ENCODE measurements at regions of chr10 and their contacts with region 1.

Region 1: GRCh38 chr10:110007701-110008517 is at the start of gene ADD3:
- DNase-seq: peak; percentile 91
- H3K4me3 ChIP-seq: peak within 1 kb of the TSS; percentile 71 to 99 (median 88)
- H3K27ac ChIP-seq: peak within 1 kb of the TSS; percentile 30
- H3K4me1 ChIP-seq: peaks cover 18% of the 10 kb centered on the region
- H3K27me3 ChIP-seq: peaks cover 0 to 4% of the 10 kb centered on the region in 2 experiments
- CTCF ChIP-seq: no peak
- POLR2A ChIP-seq: peak; percentile 57
- total RNA-seq, gene ADD3: 52.3 and 55.2 TPM in 2 replicates

Region 2: GRCh38 chr10:109214886-109215740 is 792.8 kb before region 1 on chr10:
- CTCF ChIA-PET with region 1: no interaction called
- POLR2A ChIA-PET with region 1: no interaction called
- dilution Hi-C with region 1: no loop called
- intact Hi-C with region 1: no loop called
- DNase-seq: no peak
- H3K4me3 ChIP-seq: no peak overlapping the region
- H3K27ac ChIP-seq: no peak overlapping the region
- H3K4me1 ChIP-seq: no peaks in the 10 kb centered on the region
- H3K27me3 ChIP-seq: no peaks in the 10 kb centered on the region
- CTCF ChIP-seq: no peak
- POLR2A ChIP-seq: no peak

Region 3: DNA sequence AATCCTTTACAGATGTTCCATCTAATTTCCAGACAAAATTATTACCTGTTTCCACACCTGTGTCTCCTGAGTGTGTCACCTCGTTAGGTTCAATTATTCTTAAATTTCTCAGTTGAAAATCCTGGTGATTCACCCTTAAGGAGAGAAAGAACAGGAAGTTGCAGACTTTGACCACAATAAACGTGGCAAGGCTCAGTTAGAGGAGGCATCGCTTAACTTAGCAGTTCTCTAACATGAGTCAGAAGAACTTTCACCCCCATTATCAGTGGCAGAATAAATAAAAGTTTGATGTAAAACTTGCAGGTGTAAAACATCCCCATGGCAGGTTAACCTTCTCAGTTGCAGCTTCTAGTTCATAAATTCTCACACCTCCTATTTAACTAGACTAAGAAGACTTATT is 92.9 kb before region 1 on chr10:
- CTCF ChIA-PET with region 1: no interaction called
- POLR2A ChIA-PET with region 1: no interaction called
- dilution Hi-C with region 1: no loop called
- intact Hi-C with region 1: loop called (anchors 2 kb)
- DNase-seq: peak; percentile 81
- H3K4me3 ChIP-seq: no peak overlapping the region
- H3K27ac ChIP-seq: peak overlapping the region; percentile 32
- H3K4me1 ChIP-seq: peaks cover 12% of the 10 kb centered on the region
- H3K27me3 ChIP-seq: no peaks in the 10 kb centered on the region
- CTCF ChIP-seq: no peak
- POLR2A ChIP-seq: no peak

Region 4: DNA sequence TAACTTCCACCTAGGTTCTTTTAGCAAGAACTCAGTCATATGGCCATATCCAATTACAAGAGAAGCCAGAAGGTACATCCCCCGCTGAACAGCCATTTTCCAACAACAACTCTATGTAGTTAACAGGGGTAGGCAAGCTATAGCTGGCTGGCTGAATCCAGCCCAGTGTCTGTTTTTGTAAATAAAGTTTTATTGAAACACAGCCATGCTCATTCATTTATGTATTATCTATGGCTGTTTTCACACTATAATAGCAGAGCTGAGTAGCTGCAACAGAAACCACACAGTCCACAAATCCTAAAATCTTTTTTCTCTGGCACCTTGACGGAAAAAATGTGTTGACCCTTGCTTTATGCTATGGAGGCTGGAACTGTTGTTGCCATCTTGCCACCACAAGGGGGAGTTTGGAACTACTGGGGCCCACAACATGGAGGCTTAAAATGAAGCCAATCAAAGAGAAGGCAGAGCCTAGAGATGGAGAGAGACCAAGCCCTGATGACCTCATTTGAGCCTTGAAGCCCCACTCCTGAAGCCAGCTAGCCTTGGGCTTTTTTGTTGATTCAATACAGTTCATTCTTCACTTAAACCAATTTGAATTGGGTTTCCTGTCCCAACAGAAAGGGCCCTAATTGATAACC is 51.3 kb before region 1 on chr10:
- CTCF ChIA-PET with region 1: interaction called, 3 read pairs
- POLR2A ChIA-PET with region 1: no interaction called
- dilution Hi-C with region 1: no loop called
- intact Hi-C with region 1: loop called (anchors 1 kb)
- DNase-seq: peak; percentile 41
- H3K4me3 ChIP-seq: no peak overlapping the region
- H3K27ac ChIP-seq: no peak overlapping the region
- H3K4me1 ChIP-seq: no peaks in the 10 kb centered on the region
- H3K27me3 ChIP-seq: peaks cover 0 to 2% of the 10 kb centered on the region in 2 experiments
- CTCF ChIP-seq: peak; percentile 55 to 70
- POLR2A ChIP-seq: no peak

Region 5: DNA sequence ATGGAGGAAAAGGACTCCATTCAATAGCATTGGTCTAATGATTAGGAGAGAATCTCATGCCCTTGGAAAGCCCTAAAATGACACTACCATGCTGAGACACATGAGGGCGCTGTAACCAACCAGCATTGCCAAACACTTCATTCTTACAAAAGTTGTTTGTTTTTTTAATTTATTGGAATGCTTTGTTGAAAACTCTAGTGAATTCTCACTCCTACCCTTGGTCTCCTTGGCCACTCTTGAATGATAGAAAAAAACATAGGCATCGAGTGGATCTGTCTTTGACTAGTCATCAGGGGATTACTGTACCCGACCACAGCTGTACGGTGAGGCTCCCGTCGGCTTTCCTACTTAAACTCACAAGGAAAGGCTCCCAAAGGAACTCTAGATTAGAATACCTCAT is 29.4 kb before region 1 on chr10:
- CTCF ChIA-PET with region 1: interaction called, 23 read pairs
- POLR2A ChIA-PET with region 1: no interaction called
- dilution Hi-C with region 1: no loop called
- intact Hi-C with region 1: loop called (anchors 2 kb)
- DNase-seq: peak; percentile 66
- H3K4me3 ChIP-seq: no peak overlapping the region
- H3K27ac ChIP-seq: no peak overlapping the region
- H3K4me1 ChIP-seq: no peaks in the 10 kb centered on the region
- H3K27me3 ChIP-seq: no peaks in the 10 kb centered on the region
- CTCF ChIP-seq: peak; percentile 71 to 77
- POLR2A ChIP-seq: no peak

Region 6: DNA sequence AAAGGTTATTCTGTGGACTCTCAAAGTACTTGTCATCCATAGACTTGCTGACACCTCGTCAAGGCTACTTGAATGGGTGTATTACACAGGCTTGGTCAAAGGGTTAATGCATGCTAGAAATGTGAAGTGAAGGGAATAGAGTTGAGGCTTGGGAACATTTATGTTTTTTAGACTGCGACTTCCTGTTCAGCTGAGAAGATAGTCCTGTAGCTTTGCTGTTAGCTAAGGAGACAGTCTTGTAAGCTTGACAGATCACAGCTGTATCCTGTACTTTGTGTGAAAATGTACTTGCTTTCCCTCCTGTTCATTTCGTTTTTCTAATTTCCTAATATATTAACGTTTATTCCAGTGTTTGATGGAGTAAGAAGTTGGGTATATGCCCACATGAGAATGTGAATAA is 52.0 kb after region 1 on chr10:
- CTCF ChIA-PET with region 1: no interaction called
- POLR2A ChIA-PET with region 1: interaction called, 3 read pairs
- dilution Hi-C with region 1: no loop called
- intact Hi-C with region 1: loop called (anchors 2 kb)
- DNase-seq: peak; percentile 47
- H3K4me3 ChIP-seq: no peak overlapping the region
- H3K27ac ChIP-seq: no peak overlapping the region
- H3K4me1 ChIP-seq: peaks cover 14% of the 10 kb centered on the region
- H3K27me3 ChIP-seq: no peaks in the 10 kb centered on the region
- CTCF ChIP-seq: no peak
- POLR2A ChIP-seq: no peak

Region 7: GRCh38 chr10:110081911-110082310 is 74.0 kb after region 1 on chr10:
- CTCF ChIA-PET with region 1: interaction called, 3 read pairs
- POLR2A ChIA-PET with region 1: interaction called, 3 read pairs
- dilution Hi-C with region 1: no loop called
- intact Hi-C with region 1: loop called (anchors 1 kb)
- DNase-seq: peak; percentile 97
- H3K4me3 ChIP-seq: no peak overlapping the region
- H3K27ac ChIP-seq: peak overlapping the region; percentile 90
- H3K4me1 ChIP-seq: peaks cover 41% of the 10 kb centered on the region
- H3K27me3 ChIP-seq: no peaks in the 10 kb centered on the region
- CTCF ChIP-seq: no peak
- POLR2A ChIP-seq: peak; percentile 70

Region 8: GRCh38 chr10:110210674-110211464 is 203.0 kb after region 1 on chr10:
- CTCF ChIA-PET with region 1: no interaction called
- POLR2A ChIA-PET with region 1: no interaction called
- dilution Hi-C with region 1: no loop called
- intact Hi-C with region 1: loop called (anchors 1 kb)
- DNase-seq: peak; percentile 99
- H3K4me3 ChIP-seq: peak overlapping the region; percentile 48 to 68 (median 57)
- H3K27ac ChIP-seq: no peak overlapping the region
- H3K4me1 ChIP-seq: peaks cover 4% of the 10 kb centered on the region
- H3K27me3 ChIP-seq: peaks cover 21 to 29% of the 10 kb centered on the region in 2 experiments
- CTCF ChIP-seq: no peak
- POLR2A ChIP-seq: no peak